CD4-positive, alpha-beta memory T cell (primary cell): ENCODE measurements at regions of chr16 and their contacts with region 1.

Region 1: GRCh38 chr16:84518748-84519341 is 14.4 kb upstream of the MEAK7 start:
- DNase-seq: peak; percentile 75 to 89 (median 77)
- H3K4me3 ChIP-seq: peak overlapping the region in 1 of 2 donors; percentile 27
- H3K4me3 Mint-ChIP-seq: peak overlapping the region; percentile 35 to 70 (median 46)
- H3K27ac ChIP-seq: peak overlapping the region; percentile 37
- H3K27ac Mint-ChIP-seq: peak overlapping the region; percentile 84 to 92 (median 91)
- H3K4me1 ChIP-seq: peaks cover 61% of the 10 kb centered on the region
- H3K4me1 Mint-ChIP-seq: peaks cover 42 to 67% (median 54%) of the 10 kb centered on the region in 4 donors
- H3K27me3 ChIP-seq: no peaks in the 10 kb centered on the region
- H3K27me3 Mint-ChIP-seq: no peaks in the 10 kb centered on the region

Region 2: DNA sequence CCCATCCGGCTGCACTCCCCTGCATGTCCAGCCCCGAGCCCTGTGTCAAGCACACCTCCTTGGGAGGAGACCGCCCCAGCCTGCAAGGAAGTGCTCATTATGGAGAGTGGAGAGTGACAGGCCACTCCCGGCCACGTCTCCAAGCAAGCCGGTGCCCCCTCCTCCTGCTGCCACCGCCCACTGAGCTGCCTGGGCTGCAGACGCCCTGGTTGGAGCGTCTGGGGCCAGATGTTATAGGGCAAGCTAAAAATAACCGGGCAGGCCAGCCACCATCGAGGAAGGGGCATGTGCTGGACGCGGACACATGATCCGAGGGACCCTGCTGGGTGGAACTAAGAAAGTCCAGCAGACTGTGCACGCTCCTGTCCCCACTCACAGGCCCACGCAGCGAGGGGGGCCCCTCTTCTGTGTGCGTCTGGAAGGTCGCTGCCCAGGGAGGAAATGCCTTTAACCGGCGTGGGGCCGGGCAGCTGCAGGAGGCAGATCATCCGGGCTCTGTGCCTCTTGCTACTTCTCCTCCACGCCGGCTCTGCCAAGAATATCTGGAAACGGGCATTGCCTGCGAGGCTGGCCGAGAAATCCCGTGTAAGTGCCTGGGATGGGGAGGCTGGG is 224.2 kb before region 1 on chr16 and contains the start of gene WFDC1:
- CTCF ChIA-PET with region 1: no interaction called
- POLR2A ChIA-PET with region 1: no interaction called
- intact Hi-C with region 1: no loop called
- DNase-seq: no peak
- H3K4me3 ChIP-seq: no peak within 1 kb of the TSS
- H3K4me3 Mint-ChIP-seq: peak within 1 kb of the TSS in 2 of 8 donors; percentile 25 to 54
- H3K27ac ChIP-seq: no peak within 1 kb of the TSS
- H3K27ac Mint-ChIP-seq: peak within 1 kb of the TSS in 1 of 7 donors; percentile 4
- H3K4me1 ChIP-seq: no peaks in the 10 kb centered on the region
- H3K4me1 Mint-ChIP-seq: peaks cover 0 to 11% (median 5%) of the 10 kb centered on the region in 4 donors
- H3K27me3 ChIP-seq: no peaks in the 10 kb centered on the region
- H3K27me3 Mint-ChIP-seq: peaks cover 45 to 53% of the 10 kb centered on the region in 2 donors
- total RNA-seq, gene WFDC1: not detected

Region 3: DNA sequence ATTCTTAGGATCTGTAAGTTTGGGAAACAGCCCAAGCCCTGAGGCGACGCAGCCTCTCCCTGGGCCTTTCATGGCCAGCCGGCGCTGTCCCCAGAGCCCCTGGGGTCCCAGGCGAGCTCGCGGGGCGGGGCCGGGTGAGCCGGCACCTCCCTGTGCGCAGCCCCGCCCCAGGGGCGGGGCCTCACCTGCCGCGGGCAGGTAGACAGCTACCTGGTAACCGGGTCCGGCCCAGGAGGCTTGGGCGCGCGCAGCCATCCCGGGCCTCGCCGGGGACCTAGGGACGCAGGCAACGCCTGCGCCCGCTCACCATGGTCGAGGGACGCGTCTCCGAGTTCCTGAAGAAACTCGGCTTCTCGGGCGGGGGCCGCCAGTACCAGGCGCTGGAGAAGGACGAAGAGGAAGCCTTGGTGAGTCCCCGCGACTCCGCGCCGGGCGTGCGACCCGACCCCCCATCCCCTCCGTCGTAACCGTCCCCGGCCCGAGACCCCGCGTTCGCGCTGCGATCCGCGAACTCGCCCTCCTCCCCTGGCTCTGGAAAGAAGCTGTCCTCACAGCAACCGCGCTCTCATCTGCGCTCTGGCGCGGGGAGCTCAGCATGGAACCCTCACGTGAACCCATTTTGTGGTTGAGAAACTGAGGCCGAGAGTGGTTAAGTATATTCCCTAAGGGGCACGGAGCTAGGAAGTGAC is 150.4 kb before region 1 on chr16 and contains the start of gene ATP2C2:
- CTCF ChIA-PET with region 1: no interaction called
- POLR2A ChIA-PET with region 1: no interaction called
- intact Hi-C with region 1: no loop called
- DNase-seq: no peak
- H3K4me3 ChIP-seq: no peak within 1 kb of the TSS
- H3K4me3 Mint-ChIP-seq: peak within 1 kb of the TSS in 4 of 8 donors; percentile 15 to 61 (median 48)
- H3K27ac ChIP-seq: no peak within 1 kb of the TSS
- H3K27ac Mint-ChIP-seq: no peak within 1 kb of the TSS
- H3K4me1 ChIP-seq: no peaks in the 10 kb centered on the region
- H3K4me1 Mint-ChIP-seq: peaks cover 6 to 24% (median 11%) of the 10 kb centered on the region in 4 donors
- H3K27me3 ChIP-seq: peaks cover 4% of the 10 kb centered on the region
- H3K27me3 Mint-ChIP-seq: peaks cover 32 to 38% of the 10 kb centered on the region in 2 donors
- total RNA-seq, gene ATP2C2: not detected

Region 4: DNA sequence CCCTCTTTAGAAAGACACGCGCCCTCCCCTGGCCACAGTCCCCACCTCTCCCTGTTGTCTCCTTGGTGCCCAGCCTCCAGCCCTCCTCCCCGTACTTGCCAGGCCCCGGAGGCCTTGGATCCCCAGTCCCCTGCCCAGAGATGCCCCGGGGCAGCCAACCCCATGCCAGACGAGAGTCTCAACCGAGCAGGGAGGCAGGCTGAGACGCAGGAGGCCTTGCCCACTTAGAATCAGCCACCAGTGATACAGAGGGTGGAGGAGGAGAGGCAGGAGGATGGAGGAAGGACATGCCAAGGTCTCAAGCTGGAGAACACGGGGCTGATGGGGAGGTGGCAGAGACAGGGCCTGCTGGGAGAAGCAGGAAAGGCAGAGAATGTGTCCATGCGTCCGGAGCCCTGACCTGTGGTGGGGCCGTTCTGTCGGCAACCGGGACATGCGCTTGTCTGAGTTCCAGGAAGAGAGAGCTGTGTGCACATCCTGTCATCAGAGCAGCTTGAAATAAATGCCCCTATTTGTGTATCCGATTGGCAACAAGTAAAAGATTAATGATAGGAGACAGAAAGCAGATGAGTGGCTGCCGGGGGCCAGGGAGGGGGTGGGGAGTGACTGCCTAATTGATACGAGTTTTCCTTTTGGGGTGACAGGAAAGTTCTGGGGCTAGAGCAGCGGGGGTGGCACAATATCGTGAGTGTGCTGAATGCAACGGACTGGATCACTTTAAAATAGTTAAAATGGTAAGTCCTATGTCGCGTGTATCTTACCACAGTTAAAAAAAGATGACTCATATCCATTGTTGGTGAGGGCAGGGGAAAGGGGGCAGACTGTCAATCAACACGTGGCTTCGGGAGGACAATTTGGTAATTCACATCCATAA is 30.4 kb after region 1 on chr16:
- CTCF ChIA-PET with region 1: interaction called, 23 read pairs
- POLR2A ChIA-PET with region 1: interaction called, 56 read pairs
- intact Hi-C with region 1: loop called (anchors 1 kb)
- DNase-seq: peak; percentile 63 to 74 (median 70)
- H3K4me3 ChIP-seq: peak overlapping the region; percentile 49 to 60
- H3K4me3 Mint-ChIP-seq: peak overlapping the region; percentile 84 to 96 (median 91)
- H3K27ac ChIP-seq: peak overlapping the region; percentile 81
- H3K27ac Mint-ChIP-seq: peak overlapping the region; percentile 91 to 99 (median 97)
- H3K4me1 ChIP-seq: peaks cover 78% of the 10 kb centered on the region
- H3K4me1 Mint-ChIP-seq: peaks cover 51 to 77% (median 63%) of the 10 kb centered on the region in 4 donors
- H3K27me3 ChIP-seq: no peaks in the 10 kb centered on the region
- H3K27me3 Mint-ChIP-seq: no peaks in the 10 kb centered on the region

Region 5: GRCh38 chr16:84555418-84556195 is 36.8 kb after region 1 on chr16:
- CTCF ChIA-PET with region 1: interaction called, 23 read pairs
- POLR2A ChIA-PET with region 1: interaction called, 56 read pairs
- intact Hi-C with region 1: no loop called
- DNase-seq: no peak
- H3K4me3 ChIP-seq: no peak overlapping the region
- H3K4me3 Mint-ChIP-seq: peak overlapping the region in 2 of 8 donors; percentile 11 to 24
- H3K27ac ChIP-seq: no peak overlapping the region
- H3K27ac Mint-ChIP-seq: peak overlapping the region in 5 of 7 donors; percentile 55 to 87 (median 86)
- H3K4me1 ChIP-seq: peaks cover 49% of the 10 kb centered on the region
- H3K4me1 Mint-ChIP-seq: peaks cover 30 to 51% (median 42%) of the 10 kb centered on the region in 4 donors
- H3K27me3 ChIP-seq: no peaks in the 10 kb centered on the region
- H3K27me3 Mint-ChIP-seq: no peaks in the 10 kb centered on the region

Region 6: DNA sequence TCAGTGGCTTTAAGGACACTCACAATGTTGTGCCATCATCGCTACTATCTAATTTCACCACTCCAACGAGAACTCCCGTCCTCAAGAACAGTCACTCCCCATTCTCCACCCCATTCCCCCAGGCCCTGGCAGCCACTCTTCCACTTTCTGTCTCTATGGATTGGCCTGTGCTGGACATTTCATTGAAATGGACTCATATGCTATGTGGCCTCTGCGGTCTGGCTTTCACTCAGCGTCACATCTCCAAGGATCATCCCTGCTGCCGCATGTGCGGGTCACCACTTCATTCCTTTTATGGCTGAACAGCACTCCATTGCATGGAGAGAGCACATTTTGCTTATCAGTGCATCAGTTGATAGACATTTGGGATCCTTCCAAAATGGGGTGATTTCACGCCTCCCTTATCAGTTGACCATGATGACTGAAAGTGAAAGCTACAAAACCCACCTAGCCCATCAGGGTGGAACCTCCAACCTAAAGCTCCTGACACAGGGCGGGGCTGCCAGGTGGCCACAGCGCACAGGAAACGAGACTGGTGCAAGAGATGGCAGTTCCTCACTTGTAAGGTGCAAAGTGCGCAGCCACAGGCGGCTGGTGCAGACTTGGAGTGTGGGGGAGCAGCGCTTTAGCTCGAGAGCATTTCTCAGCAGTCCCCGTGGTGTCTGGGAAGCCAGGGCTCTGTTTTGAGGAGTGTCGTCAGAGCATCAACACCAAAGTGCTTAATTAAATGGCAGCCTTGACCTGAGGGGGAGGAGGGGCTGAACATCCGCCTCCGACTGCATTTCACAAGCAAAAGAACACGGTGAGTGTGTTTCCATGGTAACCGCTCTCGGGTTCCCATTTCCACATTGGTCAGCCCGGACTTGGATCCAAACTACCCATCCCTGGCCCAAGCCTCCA is 75.2 kb after region 1 on chr16:
- CTCF ChIA-PET with region 1: interaction called, 16 read pairs
- POLR2A ChIA-PET with region 1: interaction called, 104 read pairs
- intact Hi-C with region 1: no loop called
- DNase-seq: peak; percentile 83 to 95 (median 85)
- H3K4me3 ChIP-seq: peak overlapping the region; percentile 62 to 64
- H3K4me3 Mint-ChIP-seq: peak overlapping the region; percentile 88 to 93 (median 90)
- H3K27ac ChIP-seq: peak overlapping the region; percentile 81
- H3K27ac Mint-ChIP-seq: peak overlapping the region; percentile 95 to 99 (median 98)
- H3K4me1 ChIP-seq: peaks cover 70% of the 10 kb centered on the region
- H3K4me1 Mint-ChIP-seq: peaks cover 47 to 73% (median 65%) of the 10 kb centered on the region in 4 donors
- H3K27me3 ChIP-seq: no peaks in the 10 kb centered on the region
- H3K27me3 Mint-ChIP-seq: no peaks in the 10 kb centered on the region

Region 7: DNA sequence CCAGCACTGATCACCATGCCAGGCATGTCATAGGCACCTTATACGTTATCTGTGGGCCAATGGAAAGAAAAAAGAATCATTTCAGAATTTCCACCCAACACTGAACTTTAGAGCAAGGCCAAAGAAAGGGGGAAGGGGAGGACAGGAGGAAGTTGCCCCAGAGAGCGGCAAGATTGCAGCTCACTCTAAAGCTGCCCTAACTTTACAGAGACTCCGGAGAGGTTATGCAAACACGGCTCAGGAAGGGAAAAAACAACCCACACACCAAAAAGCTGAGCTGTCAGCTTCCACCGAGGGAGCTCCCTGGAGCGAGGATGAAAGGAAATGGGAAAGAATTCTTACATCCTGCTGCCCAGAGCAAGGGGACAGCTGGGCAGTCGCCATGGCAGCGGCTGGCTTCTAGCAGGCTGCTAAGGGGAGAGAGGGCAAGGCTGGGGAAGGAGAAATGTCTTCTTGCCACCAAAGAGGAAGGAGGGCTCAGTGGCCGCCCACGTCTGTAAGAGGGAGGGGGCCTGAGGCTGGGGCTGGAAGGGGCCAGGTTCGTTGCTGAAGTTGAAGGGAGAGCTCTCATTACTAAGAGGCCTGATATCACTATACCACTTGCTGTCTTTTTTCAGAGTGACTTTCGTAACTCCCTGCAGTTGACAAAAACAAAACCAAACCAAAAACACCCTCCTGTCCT is 80.8 kb after region 1 on chr16:
- CTCF ChIA-PET with region 1: interaction called, 16 read pairs
- POLR2A ChIA-PET with region 1: interaction called, 104 read pairs
- intact Hi-C with region 1: loop called (anchors 2 kb)
- DNase-seq: peak in 4 of 5 donors; percentile 37 to 72 (median 48)
- H3K4me3 ChIP-seq: peak overlapping the region; percentile 57
- H3K4me3 Mint-ChIP-seq: peak overlapping the region; percentile 82 to 92 (median 88)
- H3K27ac ChIP-seq: peak overlapping the region; percentile 89
- H3K27ac Mint-ChIP-seq: peak overlapping the region; percentile 94 to 98 (median 95)
- H3K4me1 ChIP-seq: peaks cover 97% of the 10 kb centered on the region
- H3K4me1 Mint-ChIP-seq: peaks cover 72 to 96% (median 84%) of the 10 kb centered on the region in 4 donors
- H3K27me3 ChIP-seq: no peaks in the 10 kb centered on the region
- H3K27me3 Mint-ChIP-seq: no peaks in the 10 kb centered on the region